Psoas muscle (tissue), 8 donors: ENCODE measurements at regions of chr11 and their contacts with region 1.

Region 1: DNA sequence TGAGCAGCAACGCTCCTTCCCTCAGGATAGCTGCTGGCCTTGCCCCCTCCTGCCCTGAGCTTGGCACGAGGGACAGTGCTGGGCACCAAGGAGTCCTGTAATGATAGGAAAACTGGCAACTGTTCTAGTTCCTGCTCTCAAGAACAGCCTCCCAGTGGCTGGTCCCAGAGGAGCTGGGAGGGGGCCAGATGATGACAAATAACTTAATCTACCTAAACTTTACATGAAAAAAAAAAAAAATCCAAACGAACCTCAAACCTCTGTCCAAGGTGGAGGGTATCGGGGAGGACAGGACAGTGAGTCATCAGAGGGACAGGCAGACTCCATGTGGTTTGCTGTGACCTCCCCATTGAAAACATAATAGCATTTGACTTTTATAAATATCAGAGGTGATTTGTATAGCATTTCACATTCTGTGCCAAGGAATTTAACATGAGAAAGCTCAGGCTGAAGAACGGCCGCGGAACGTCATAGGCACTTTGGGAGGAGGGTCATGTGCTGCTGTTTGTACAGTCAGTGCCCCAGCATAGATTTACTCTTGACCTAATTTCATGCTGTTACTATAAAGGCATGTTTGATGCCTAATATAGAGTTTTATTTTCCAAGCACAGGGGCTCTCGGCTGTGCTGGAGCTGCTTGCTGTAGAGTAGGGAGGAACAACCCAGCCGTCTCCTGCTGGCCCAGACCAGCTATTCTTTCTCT is 98.2 kb upstream of the NNMT start:
- DNase-seq: peak; percentile 80 to 92
- ATAC-seq: peak; percentile 68 to 85 (median 80)
- H3K4me3 ChIP-seq: peak overlapping the region; percentile 23
- H3K27ac ChIP-seq: peak overlapping the region; percentile 91
- H3K4me1 ChIP-seq: peaks cover 96% of the 10 kb centered on the region
- H3K27me3 ChIP-seq: no peaks in the 10 kb centered on the region
- CTCF ChIP-seq: no peak

Region 2: DNA sequence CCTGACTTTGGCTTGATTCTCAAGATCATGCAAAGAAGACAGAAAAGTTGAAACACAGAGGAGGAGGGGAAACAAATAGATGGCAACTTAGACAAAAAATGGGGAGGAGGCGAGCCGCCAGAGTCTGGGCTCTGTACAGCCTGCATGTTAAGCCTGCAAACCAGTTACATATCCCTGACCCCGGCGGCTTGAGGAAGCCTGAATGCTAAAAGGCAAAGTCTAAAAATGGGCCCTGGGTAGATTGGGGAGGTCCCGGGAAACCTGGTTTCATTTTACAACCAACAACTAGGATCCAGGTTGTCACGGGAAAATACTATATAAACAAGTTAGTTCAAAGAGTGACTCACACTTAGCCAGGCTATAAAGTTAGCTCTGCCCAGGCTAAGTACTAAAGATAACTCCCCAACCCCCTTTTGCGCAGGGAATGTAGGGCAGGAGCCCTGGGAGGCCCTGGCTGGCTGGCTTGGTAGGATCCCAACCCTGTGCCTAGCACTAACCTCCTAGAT is 157.2 kb before region 1 on chr11:
- intact Hi-C with region 1: no loop called
- DNase-seq: peak in 1 of 2 donors; percentile 73
- ATAC-seq: peak; percentile 69 to 90 (median 88)
- H3K4me3 ChIP-seq: peak overlapping the region; percentile 13
- H3K27ac ChIP-seq: peak overlapping the region; percentile 81
- H3K4me1 ChIP-seq: peaks cover 39% of the 10 kb centered on the region
- H3K27me3 ChIP-seq: no peaks in the 10 kb centered on the region
- CTCF ChIP-seq: no peak

Region 3: DNA sequence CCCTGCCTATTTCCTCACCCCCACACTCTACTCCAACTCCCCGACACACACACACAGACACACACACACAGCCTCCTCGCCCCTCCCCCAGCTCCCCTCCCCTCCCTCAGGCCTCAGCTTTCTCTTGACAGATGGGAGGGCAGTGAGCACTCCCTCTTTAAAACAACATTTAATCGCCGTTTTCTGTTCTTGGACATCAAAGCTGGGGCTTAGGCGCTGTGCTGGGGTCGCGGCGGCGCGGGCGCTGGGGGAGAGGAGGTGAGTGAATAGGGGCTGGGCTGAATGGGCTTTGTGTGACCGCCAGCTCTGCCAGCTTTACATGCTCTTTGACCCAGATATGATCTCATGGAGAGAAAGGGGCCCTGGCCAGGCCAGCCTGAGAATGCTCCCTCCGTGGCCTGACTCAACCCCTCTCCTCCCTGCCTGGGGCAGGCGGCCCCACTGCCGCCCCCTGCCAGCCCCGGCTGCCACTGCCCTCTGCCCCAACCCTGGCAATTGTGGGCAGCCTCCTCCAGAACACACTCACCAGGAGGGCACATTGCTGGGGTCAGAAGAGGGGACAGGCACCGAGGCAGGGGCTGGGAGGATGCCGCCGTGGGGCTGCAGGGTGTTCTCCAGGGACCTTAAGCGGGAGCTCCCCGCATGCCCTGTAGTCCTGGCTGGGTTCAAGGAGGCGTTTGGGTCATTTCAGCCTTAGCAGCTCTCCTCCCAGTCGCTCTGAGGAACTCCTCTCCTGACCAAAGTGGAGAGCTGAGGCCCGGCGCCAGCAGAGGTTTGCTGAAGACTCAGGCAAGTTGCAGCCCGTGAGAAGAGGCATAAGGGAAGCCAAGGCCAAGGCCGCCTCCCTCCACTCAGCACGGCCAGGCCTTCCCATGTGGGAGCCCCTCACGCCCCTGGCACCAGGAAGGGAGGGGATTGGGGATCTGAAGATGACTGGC is 59.9 kb after region 1 on chr11:
- intact Hi-C with region 1: loop called (anchors 1 to 10 kb)
- DNase-seq: peak; percentile 69 to 87
- ATAC-seq: peak; percentile 48 to 58 (median 52)
- H3K4me3 ChIP-seq: peak overlapping the region; percentile 29
- H3K27ac ChIP-seq: peak overlapping the region; percentile 89
- H3K4me1 ChIP-seq: peaks cover 66% of the 10 kb centered on the region
- H3K27me3 ChIP-seq: no peaks in the 10 kb centered on the region
- CTCF ChIP-seq: peak; percentile 30